ENCODE measurements at regions of chr6 and their contacts with region 1.

Region 1: GRCh38 chr6:10465629-10466504 is 51.0 kb upstream of the TFAP2A start:
- DNase-seq: no peak
- ATAC-seq: no peak
- H3K4me3 Mint-ChIP-seq: no peak overlapping the region
- H3K27ac Mint-ChIP-seq: no peak overlapping the region
- H3K4me1 Mint-ChIP-seq: no peaks in the 10 kb centered on the region
- H3K27me3 Mint-ChIP-seq: peaks cover 13% of the 10 kb centered on the region

Region 2: DNA sequence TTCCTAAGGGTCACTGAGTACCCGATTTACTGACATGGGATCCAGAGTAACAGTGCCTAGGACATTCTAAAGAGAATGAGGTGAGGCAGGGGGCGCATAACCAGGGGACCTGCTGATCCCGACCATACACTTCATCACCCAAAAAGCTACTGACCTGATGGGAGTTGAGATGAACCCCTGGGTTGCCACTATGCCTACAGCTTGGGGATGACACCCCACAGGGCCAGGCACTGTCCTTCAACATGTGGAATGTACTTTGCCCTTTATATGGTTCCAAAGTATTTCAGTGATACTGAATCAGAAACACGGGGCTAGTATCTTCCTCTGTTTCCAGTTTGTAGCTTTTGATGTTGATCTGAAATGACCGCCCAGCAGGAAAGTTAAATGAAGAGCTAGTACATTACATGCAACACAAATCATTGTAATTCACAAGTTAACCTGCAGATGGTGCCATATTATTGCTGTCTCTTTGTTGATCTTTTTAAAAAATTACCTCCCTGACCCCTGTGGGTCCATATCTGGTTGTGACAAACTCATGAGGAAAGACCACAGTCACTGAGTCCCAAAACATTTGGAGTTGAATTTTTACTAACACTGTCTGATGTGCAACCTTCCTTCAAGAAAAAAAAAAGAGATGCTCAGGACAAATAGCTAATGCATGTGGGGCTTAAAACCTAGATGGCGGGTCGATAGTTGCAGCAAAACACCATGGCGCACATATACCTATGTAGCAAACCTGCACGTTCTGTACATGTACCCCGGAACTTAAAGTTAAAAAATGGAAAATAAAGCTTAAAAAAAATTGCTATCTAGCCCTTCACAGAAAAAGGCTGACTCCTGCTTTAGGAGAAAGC is 12.5 kb after region 1 on chr6:
- CTCF ChIA-PET with region 1: interaction called, 13 read pairs
- DNase-seq: no peak
- ATAC-seq: peak; percentile 33
- H3K4me3 Mint-ChIP-seq: no peak overlapping the region
- H3K27ac Mint-ChIP-seq: no peak overlapping the region
- H3K4me1 Mint-ChIP-seq: peaks cover 2% of the 10 kb centered on the region
- H3K27me3 Mint-ChIP-seq: peaks cover 28% of the 10 kb centered on the region

Region 3: DNA sequence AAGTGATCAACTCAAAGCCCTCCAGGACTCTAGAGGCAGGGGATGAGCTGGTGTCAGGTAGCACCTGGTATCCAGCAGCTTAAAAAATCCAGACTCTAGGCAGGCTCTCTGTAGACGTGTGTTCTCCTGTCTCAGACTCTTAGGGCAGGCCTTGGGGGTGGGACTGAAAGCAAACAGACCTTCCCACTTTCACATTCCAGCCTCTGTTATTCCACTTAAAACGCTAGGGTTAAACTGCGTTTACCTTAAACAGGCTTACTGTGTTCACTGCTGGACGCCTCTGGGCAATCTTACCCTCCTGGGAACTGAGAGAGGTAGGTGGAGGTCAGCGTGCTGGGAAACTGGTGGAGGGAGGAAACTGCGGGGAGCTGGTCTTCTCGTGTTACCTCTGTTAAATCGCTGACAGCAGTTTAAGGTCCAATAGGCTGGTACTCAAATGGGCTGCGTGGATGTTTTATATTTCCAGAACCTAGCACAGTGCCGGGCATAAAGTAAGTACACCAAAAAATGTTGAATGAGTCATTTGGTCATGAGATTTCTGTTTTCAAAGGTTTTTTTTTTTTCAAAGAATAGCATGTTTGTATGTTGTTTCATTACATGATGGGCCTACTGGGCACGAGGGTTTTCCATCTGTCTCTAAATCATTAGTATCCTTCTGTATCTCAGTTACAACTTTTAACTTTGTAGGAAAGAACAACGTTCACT is 55.4 kb after region 1 on chr6 and contains the start of gene GCNT2:
- CTCF ChIA-PET with region 1: no interaction called
- DNase-seq: no peak
- ATAC-seq: no peak
- H3K4me3 Mint-ChIP-seq: no peak within 1 kb of the TSS
- H3K27ac Mint-ChIP-seq: no peak within 1 kb of the TSS
- H3K4me1 Mint-ChIP-seq: peaks cover 3% of the 10 kb centered on the region
- H3K27me3 Mint-ChIP-seq: peaks cover 12% of the 10 kb centered on the region
- total RNA-seq, gene GCNT2: 2.2 to 4.3 TPM

Region 4: GRCh38 chr6:11188161-11188915 is 722.5 kb after region 1 on chr6:
- CTCF ChIA-PET with region 1: no interaction called
- DNase-seq: no peak
- ATAC-seq: no peak
- H3K4me3 Mint-ChIP-seq: no peak overlapping the region
- H3K27ac Mint-ChIP-seq: no peak overlapping the region
- H3K4me1 Mint-ChIP-seq: no peaks in the 10 kb centered on the region
- H3K27me3 Mint-ChIP-seq: no peaks in the 10 kb centered on the region